B cell (primary cell): ENCODE measurements at regions of chr5 and their contacts with region 1.

Region 1: GRCh38 chr5:57193757-57194413 is 20.0 kb downstream of the GPBP1 start:
- DNase-seq: no peak
- ATAC-seq: no peak
- H3K4me3 ChIP-seq: no peak overlapping the region
- H3K4me3 Mint-ChIP-seq: no peak overlapping the region
- H3K27ac ChIP-seq: no peak overlapping the region
- H3K27ac Mint-ChIP-seq: no peak overlapping the region
- H3K4me1 ChIP-seq: peaks cover 9 to 10% of the 10 kb centered on the region in 2 donors
- H3K4me1 Mint-ChIP-seq: peaks cover 50% of the 10 kb centered on the region
- H3K27me3 ChIP-seq: no peaks in the 10 kb centered on the region
- H3K27me3 Mint-ChIP-seq: no peaks in the 10 kb centered on the region
- CTCF ChIP-seq: no peak

Region 2: DNA sequence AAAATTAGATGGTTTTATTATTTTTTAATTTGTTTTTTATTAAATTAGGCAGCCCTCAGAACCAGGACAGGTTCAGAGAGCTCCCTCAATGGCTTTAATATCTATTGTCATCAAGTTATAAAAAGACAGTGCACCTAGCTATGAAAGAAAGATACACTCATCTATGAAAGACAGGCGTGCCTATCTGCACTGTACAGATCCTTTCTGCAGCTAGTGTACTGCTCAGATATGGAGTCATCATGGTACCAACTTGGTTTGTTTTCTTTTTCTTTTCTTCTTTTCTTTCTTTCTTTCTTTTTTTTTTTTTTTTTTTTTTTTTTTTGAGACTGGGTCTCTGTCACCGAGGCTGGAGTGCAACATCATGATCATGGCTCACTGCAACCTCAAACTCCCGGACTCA is 74.9 kb before region 1 on chr5:
- CTCF ChIA-PET with region 1: no interaction called
- POLR2A ChIA-PET with region 1: no interaction called
- intact Hi-C with region 1: no loop called
- DNase-seq: no peak
- ATAC-seq: no peak
- H3K4me3 ChIP-seq: no peak overlapping the region
- H3K4me3 Mint-ChIP-seq: no peak overlapping the region
- H3K27ac ChIP-seq: no peak overlapping the region
- H3K27ac Mint-ChIP-seq: no peak overlapping the region
- H3K4me1 ChIP-seq: no peaks in the 10 kb centered on the region
- H3K4me1 Mint-ChIP-seq: no peaks in the 10 kb centered on the region
- H3K27me3 ChIP-seq: no peaks in the 10 kb centered on the region
- H3K27me3 Mint-ChIP-seq: no peaks in the 10 kb centered on the region
- CTCF ChIP-seq: no peak

Region 3: DNA sequence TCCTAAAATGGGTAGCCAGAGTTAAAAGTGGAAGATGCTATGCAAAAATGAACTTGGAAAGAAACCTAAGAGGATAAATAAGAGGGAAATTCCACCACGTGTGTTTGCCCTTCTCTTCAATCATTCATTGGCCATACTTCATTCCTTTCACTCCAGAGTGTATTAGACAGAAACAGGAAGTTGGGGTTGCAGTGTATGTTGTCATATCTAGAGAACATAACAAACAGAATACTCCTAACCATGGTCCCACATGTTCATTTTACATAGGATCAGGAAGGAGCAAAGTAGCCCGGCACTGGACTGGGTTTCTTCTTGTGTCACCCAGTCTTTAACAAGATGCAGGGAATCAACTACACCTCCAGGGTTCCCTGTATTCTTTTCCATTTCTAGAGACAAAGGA is 27.6 kb before region 1 on chr5:
- CTCF ChIA-PET with region 1: no interaction called
- POLR2A ChIA-PET with region 1: no interaction called
- intact Hi-C with region 1: no loop called
- DNase-seq: no peak
- ATAC-seq: no peak
- H3K4me3 ChIP-seq: no peak overlapping the region
- H3K4me3 Mint-ChIP-seq: no peak overlapping the region
- H3K27ac ChIP-seq: no peak overlapping the region
- H3K27ac Mint-ChIP-seq: no peak overlapping the region
- H3K4me1 ChIP-seq: peaks cover 0 to 3% of the 10 kb centered on the region in 2 donors
- H3K4me1 Mint-ChIP-seq: peaks cover 7% of the 10 kb centered on the region
- H3K27me3 ChIP-seq: no peaks in the 10 kb centered on the region
- H3K27me3 Mint-ChIP-seq: no peaks in the 10 kb centered on the region
- CTCF ChIP-seq: no peak

Region 4: GRCh38 chr5:57207681-57208080 is 13.8 kb after region 1 on chr5:
- CTCF ChIA-PET with region 1: no interaction called
- POLR2A ChIA-PET with region 1: no interaction called
- intact Hi-C with region 1: loop called (anchors 2 kb)
- DNase-seq: no peak
- ATAC-seq: no peak
- H3K4me3 ChIP-seq: no peak overlapping the region
- H3K4me3 Mint-ChIP-seq: peak overlapping the region; percentile 52
- H3K27ac ChIP-seq: no peak overlapping the region
- H3K27ac Mint-ChIP-seq: no peak overlapping the region
- H3K4me1 ChIP-seq: peaks cover 31 to 51% of the 10 kb centered on the region in 2 donors
- H3K4me1 Mint-ChIP-seq: peaks cover 66% of the 10 kb centered on the region
- H3K27me3 ChIP-seq: no peaks in the 10 kb centered on the region
- H3K27me3 Mint-ChIP-seq: no peaks in the 10 kb centered on the region
- CTCF ChIP-seq: no peak